SK-N-SH (cell line): ENCODE measurements at regions of chr6 and their contacts with region 1.

Region 1: GRCh38 chr6:119110601-119111548 is 32.4 kb upstream of the FAM184A start:
- DNase-seq: peak; percentile 49
- H3K4me3 ChIP-seq: no peak overlapping the region
- H3K27ac ChIP-seq: no peak overlapping the region
- H3K4me1 ChIP-seq: no peaks in the 10 kb centered on the region
- H3K27me3 ChIP-seq: no peaks in the 10 kb centered on the region
- CTCF ChIP-seq: peak; percentile 67
- EP300 ChIP-seq: no peak
- RAD21 ChIP-seq: peak; percentile 87

Region 2: DNA sequence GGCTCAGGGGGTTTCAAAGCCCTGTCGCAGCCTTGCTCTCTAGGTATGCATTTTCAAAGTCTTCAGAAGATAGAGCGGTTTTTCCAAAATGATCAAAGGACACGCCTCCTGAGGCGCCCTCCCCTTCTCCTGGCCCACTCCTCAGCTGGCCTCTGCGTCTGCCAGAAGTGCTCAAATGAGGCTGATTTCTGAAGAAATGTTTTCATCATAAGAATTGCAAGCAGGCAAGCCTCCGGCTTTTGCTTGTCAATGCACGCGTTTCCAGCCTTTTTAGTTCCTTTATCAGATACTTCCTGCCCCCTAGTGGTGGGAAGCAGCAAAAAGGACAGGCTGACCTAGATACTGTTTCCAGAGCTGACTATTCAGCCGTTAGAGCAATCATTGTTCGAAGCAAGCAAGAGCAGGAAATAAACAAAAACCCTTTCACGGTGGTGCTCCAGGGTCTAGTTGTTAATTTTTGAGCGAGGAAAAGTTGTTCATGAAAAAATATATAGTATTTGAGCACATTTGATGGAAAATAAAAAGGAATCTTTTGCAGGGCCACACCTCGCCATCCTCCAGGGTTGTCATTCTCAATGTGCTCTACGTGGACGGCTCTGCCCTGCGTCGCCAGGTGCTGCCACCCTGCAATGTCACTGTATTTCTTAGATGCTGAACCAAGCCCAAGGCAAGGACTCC is 310.3 kb before region 1 on chr6:
- CTCF ChIA-PET with region 1: interaction called, 17 read pairs
- POLR2A ChIA-PET with region 1: no interaction called
- DNase-seq: peak; percentile 78
- H3K4me3 ChIP-seq: peak overlapping the region in 1 of 2 experiments; percentile 30; a peak in 2 of 4 replicates
- H3K27ac ChIP-seq: no peak overlapping the region
- H3K4me1 ChIP-seq: peaks cover 0 to 5% of the 10 kb centered on the region in 2 experiments; a peak in 2 of 4 replicates
- H3K27me3 ChIP-seq: no peaks in the 10 kb centered on the region
- CTCF ChIP-seq: peak; percentile 89
- EP300 ChIP-seq: no peak
- RAD21 ChIP-seq: peak; percentile 83

Region 3: GRCh38 chr6:118963003-118963402 is 147.9 kb before region 1 on chr6:
- CTCF ChIA-PET with region 1: interaction called, 74 read pairs
- POLR2A ChIA-PET with region 1: no interaction called
- DNase-seq: no peak
- H3K4me3 ChIP-seq: no peak overlapping the region
- H3K27ac ChIP-seq: no peak overlapping the region
- H3K4me1 ChIP-seq: no peaks in the 10 kb centered on the region
- H3K27me3 ChIP-seq: no peaks in the 10 kb centered on the region
- CTCF ChIP-seq: peak; percentile 55
- EP300 ChIP-seq: no peak
- RAD21 ChIP-seq: no peak

Region 4: DNA sequence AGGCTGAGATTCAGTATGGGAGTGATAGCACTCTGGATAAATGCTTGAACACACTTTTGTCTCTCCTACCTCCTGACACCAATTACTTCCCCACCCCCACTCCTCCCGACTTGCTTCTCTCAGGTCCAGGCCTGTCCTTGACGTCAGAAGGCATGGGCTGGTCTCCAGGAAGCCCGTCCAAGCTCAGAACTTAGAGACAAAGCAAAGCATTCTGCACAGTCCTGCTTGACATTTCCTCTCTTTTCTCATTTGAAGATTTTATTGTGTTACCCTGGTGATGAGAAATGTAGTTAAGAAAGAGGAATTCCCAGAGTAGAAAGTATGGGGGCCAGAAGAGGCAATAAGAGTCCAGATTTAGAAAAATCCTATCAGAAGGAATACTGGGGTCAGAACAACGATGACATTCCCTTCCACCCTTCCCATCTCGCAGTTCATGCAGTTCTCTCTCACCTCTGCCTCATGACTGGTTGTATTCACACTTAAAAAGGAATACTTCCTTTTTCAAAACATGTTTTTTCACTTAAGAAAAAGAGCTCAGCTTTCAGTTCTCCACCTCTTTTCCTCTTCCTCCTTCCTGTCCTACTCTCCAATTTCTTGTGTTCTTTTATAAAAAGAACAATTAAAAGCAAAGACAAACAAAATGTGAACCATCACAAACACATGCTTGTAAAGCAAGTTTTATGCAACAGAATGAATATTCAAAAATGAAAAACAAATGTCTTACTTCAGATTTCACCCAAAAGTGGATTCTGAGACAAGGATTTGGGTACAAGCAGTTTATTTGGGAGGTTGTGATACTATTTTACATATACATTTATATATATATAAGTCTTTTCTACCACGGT is 13.9 kb before region 1 on chr6:
- CTCF ChIA-PET with region 1: interaction called, 14 read pairs
- POLR2A ChIA-PET with region 1: no interaction called
- DNase-seq: no peak
- H3K4me3 ChIP-seq: no peak overlapping the region
- H3K27ac ChIP-seq: no peak overlapping the region
- H3K4me1 ChIP-seq: no peaks in the 10 kb centered on the region; a peak in 1 of 4 replicates
- H3K27me3 ChIP-seq: no peaks in the 10 kb centered on the region
- CTCF ChIP-seq: no peak
- EP300 ChIP-seq: no peak
- RAD21 ChIP-seq: no peak

Region 5: DNA sequence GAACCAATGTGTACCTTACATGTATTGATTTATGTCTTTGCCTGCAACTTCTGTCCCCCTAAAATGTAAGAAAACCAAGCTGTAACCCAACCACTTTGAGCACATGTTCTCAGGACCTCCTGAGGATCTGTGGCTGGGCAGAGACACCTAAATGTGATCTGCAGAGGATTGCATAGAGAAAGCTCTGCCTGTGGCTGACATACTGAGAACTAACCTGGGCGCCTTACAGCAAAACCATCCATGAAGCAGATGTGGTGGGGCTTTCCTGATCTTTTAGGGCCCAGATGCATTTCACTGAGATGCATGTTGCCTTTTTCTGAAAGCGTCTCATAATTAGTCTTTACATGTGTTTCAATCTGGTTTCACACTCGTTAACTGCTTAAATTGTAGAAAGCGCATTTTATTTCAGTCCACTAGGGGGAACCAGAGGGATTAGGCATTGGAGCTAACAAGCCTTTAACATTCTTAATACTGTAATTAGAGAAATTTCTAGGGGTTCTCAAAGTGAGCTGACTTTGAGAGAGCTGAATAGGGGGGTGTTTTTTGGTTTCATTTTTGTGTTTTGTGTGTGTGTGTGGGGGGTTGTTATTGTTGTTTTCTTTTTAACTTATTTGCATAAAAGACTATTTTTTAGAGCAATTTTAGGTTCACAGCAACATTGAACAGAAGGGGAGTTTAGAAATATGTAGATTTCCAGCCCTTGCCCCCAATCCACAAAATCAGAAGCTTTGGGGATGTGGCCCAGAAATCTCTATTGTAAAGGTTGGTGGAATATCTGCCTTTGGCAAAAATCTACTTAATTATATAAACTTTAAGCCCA is 18.5 kb after region 1 on chr6:
- CTCF ChIA-PET with region 1: interaction called, 23 read pairs
- POLR2A ChIA-PET with region 1: no interaction called
- DNase-seq: peak; percentile 50
- H3K4me3 ChIP-seq: peak overlapping the region in 1 of 2 experiments; percentile 24; a peak in 2 of 4 replicates
- H3K27ac ChIP-seq: peak overlapping the region; percentile 67 to 94
- H3K4me1 ChIP-seq: peaks cover 18 to 21% of the 10 kb centered on the region in 2 experiments
- H3K27me3 ChIP-seq: no peaks in the 10 kb centered on the region
- CTCF ChIP-seq: peak; percentile 91
- EP300 ChIP-seq: no peak
- RAD21 ChIP-seq: peak; percentile 77

Region 6: DNA sequence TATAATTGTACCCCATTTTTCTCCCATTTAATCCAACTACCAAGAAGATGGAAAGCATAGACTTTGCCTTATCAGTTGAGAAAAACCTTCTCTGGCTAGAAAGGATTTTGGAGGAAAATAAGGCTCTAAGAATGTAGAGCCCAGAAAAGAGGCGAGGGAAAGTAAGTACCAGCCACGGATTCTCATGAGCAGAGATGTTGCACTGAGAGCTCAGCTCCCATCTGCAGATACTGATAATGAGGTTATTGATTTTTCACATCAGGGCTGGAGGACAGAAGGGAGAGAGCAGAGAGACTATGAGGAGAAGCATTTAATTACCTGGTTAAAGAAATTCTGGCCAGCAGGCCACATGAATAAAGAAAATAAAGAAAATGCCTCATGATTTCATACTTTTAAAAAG is 72.0 kb after region 1 on chr6:
- CTCF ChIA-PET with region 1: no interaction called
- POLR2A ChIA-PET with region 1: no interaction called
- DNase-seq: no peak
- H3K4me3 ChIP-seq: no peak overlapping the region
- H3K27ac ChIP-seq: no peak overlapping the region
- H3K4me1 ChIP-seq: peaks cover 0 to 2% of the 10 kb centered on the region in 2 experiments; a peak in 2 of 4 replicates
- H3K27me3 ChIP-seq: no peaks in the 10 kb centered on the region
- CTCF ChIP-seq: no peak
- EP300 ChIP-seq: no peak
- RAD21 ChIP-seq: no peak